ENCODE measurements at regions of chr2 and their contacts with region 1.

Region 1: DNA sequence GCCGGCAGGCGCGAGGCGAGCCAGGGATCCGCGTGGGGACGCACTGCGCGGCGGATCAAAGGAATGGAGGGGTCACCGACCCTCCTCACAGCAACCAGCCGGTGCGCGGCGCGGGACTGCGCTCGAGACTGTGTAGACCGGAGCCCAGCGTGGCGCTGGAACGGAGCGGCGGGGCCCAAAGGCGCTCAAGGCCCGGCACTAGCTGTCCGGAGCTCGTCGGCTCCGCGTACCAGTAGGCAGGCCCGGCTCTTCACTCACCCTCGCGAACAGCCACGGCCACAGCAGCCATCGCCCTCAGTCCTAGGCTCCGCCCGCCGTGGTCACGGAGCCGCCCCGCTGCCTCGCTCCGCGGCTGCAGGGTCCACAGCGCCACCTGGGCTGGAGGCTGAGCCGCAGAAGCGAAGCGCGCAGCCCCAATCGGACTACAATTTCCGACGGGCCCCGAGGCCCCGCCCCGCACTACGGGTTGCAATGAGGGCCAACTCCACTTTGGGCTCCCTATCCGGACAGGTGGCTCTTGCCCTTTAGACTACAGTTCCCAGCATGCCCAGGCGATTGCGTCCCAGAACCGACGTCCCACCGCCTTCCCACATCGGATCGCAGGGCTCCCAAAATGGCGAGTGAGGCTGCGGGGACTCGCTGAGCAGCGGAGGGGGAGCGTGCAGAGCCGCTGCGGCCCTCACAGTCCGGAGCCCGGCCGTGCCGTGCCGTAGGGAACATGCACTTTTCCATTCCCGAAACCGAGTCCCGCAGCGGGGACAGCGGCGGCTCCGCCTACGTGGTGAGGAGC is at the starts of genes EIF2B4 and SNX17:
- DNase-seq: peak; percentile 98 to 100 (median 100)

Region 2: GRCh38 chr2:27211829-27212627 is 158.2 kb before region 1 on chr2 and contains the starts of genes ATRAID and SLC5A6:
- intact Hi-C with region 1: loop called (anchors 5 kb)
- DNase-seq: peak; percentile 76 to 98 (median 88)

Region 3: GRCh38 chr2:27322766-27323595 is 47.2 kb before region 1 on chr2 and contains the start of gene MPV17:
- intact Hi-C with region 1: loop called (anchors 5 kb)
- DNase-seq: peak; percentile 89 to 99 (median 94)

Region 4: GRCh38 chr2:27356382-27357181 is 13.6 kb before region 1 on chr2 and contains the start of gene GTF3C2:
- intact Hi-C with region 1: loop called (anchors 1 kb)
- DNase-seq: peak; percentile 91 to 99 (median 95)

Region 5: GRCh38 chr2:27380626-27381545 is 10.7 kb after region 1 on chr2 and contains the start of gene ZNF513:
- intact Hi-C with region 1: loop called (anchors 1 kb)
- DNase-seq: peak; percentile 97 to 100 (median 98)

Region 6: GRCh38 chr2:27390822-27391679 is 20.8 kb after region 1 on chr2:
- intact Hi-C with region 1: no loop called
- DNase-seq: no peak

Region 7: DNA sequence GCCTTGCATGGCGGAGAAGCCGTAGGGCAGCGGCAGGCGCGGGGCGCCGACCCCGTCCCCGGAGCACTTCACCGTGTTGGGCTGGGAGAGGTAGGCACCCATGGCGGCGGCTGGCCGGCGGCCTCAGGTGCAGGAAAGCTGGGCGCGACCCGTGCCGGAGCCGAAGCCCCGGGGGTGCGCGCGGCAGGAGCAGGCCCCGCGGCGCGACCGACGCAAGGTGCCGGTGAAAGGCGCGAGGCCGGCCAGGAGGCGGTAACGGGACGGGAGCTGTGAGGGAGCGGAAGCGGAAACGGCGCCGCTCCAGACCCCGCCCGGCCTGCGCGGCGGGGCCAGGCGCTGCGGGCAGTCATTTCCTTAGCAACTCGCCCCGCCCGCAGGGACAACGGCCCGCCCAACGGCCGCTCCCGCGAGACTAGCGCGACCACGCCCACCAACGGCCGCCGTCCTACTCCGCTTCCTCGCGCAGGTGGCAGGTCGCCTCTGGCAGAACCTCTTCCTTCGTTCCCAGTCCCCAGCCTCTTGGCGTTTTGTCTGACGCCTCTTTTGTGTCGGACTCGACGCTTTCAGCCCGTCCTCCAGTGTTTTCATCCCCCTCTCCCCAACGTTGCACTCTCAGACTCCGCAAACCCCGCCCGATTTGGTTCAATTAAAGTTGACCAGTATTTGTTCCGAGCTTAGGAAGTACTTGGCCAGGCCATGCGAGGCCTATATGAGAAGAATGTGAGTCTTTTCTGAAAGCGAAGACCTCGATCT is 39.3 kb after region 1 on chr2 and contains the start of gene PPM1G:
- intact Hi-C with region 1: loop called (anchors 1 kb)
- DNase-seq: peak; percentile 93 to 100 (median 97)